HEK293 (cell line): ENCODE measurements at regions of chr6 and their contacts with region 1.

Region 1: GRCh38 chr6:30411515-30412207 is 66.7 kb downstream of the RPP21 start:
- H3K4me3 ChIP-seq: no peak overlapping the region
- H3K27ac ChIP-seq: no peak overlapping the region
- H3K4me1 ChIP-seq: no peaks in the 10 kb centered on the region
- CTCF ChIP-seq: peak; percentile 41; the same call in 1 of the 2 replicates

Region 2: GRCh38 chr6:30424549-30424948 is 12.9 kb after region 1 on chr6:
- CTCF ChIA-PET with region 1: interaction called, 11 read pairs
- POLR2A ChIA-PET with region 1: no interaction called
- H3K4me3 ChIP-seq: no peak overlapping the region
- H3K27ac ChIP-seq: no peak overlapping the region
- H3K4me1 ChIP-seq: no peaks in the 10 kb centered on the region
- CTCF ChIP-seq: no peak

Region 3: DNA sequence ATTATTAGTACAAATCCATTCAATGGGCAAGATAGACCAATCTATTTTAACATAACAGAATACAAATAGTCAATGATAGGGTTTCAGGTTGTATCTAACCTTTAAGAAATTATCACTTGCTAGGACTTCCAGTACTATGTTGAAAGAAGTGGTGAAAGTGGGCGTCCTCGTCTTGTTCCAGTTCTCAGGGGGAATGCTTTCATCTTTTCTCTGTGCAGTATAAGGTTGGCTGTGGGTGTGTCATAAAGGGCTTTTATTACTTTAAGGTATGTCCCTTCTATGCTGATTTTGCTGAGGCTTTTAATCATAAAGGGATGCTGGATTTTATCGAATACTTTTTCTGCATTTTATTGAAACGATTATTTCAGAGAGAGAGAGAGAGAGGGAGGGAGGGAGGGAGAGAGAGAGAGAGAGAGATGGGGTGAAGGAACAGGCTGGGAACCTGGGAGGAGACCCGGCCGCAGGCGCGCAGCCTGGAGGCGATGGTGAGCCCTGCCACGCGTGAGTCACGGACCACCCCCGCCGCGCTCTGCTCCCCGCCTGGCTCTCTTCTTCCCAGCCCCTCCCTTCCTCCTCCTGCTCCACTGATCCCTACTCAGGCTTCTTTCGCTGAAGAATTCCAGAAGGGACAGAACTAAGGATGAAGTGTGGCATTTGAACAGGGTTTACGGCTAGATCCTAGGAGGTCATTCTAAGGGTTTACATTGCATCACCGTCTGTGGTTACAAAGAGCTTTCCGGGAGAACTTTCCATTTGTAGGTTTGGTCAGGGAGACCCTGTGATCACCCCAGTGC is 32.2 kb after region 1 on chr6:
- CTCF ChIA-PET with region 1: interaction called, 12 read pairs
- POLR2A ChIA-PET with region 1: no interaction called
- H3K4me3 ChIP-seq: no peak overlapping the region
- H3K27ac ChIP-seq: no peak overlapping the region
- H3K4me1 ChIP-seq: 0 out of 2 replicates have a peak, but pooled peaks cover 3% of the 10 kb centered on the region
- CTCF ChIP-seq: no peak

Region 4: DNA sequence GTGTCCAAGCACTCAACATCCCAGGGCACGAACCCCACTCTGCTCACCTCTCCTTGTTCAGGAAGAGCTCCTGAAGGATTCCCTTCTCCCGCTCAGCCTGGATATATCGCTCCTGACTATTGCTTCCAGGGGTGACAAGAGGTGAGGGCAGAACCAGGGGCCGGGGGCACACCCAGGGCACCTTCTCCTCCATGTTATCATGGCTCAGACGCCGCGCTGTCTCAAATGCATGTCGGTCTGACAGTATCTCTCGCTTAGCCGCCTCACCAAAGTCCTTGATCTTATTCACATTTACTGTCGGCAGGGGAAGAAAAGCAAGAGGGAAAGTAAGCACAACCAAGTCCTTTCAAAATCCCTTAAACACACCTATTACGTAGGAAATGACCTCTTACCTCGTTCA is 192.3 kb after region 1 on chr6:
- CTCF ChIA-PET with region 1: no interaction called
- POLR2A ChIA-PET with region 1: no interaction called
- H3K4me3 ChIP-seq: no peak overlapping the region
- H3K27ac ChIP-seq: 0 out of 2 replicates have a peak overlapping the region, but pooled peaks have one; percentile 20
- H3K4me1 ChIP-seq: no peaks in the 10 kb centered on the region
- CTCF ChIP-seq: no peak

Region 5: GRCh38 chr6:31025595-31025994 is 613.9 kb after region 1 on chr6:
- CTCF ChIA-PET with region 1: no interaction called
- POLR2A ChIA-PET with region 1: no interaction called
- H3K4me3 ChIP-seq: no peak overlapping the region
- H3K27ac ChIP-seq: no peak overlapping the region
- H3K4me1 ChIP-seq: no peaks in the 10 kb centered on the region
- CTCF ChIP-seq: no peak